ENCODE measurements at regions of chr6 and their contacts with region 1.

Region 1: DNA sequence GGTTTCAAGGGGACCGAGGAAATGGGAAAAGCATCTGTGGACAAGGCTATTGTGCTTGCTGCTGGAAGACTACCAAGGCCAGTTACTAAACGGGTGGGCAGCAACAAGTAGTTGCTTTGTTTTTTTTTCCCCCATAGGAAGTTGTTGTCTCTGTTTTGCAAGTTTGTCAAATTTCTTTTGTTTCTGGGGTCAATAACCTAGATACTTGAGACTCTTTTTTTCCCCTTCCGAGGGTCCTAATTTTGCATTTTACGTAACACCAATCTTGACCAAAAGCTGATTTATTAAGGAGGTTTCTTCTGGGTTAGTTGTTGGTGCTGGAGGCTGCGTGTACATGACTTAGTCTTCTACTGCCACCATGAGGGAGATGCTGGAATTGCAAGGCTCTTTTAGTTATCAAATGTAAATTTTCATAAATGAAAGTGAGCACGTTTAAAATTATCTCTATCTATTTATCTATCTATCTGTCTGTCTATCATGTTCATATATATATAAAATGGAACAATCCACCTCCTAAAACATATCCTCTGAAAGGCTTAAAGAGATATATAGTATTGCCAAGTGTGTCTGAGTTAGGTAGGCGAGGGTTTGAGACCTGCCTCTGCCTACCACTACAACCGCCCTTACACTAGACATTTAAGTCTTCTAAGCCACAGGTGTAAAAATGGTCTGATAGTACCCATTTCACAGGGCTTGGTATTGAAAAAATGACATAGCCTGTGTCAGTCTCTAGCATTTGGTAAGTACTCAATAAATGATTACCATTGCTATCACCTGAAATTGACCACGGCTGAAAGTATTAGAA is 60.2 kb downstream of the GCLC start:
- DNase-seq: peak; percentile 51 to 87
- ATAC-seq: peak; percentile 79 to 84 (median 81)
- H3K4me3 ChIP-seq: no peak overlapping the region
- H3K4me3 Mint-ChIP-seq: no peak overlapping the region
- H3K27ac ChIP-seq: no peak overlapping the region
- H3K27ac Mint-ChIP-seq: no peak overlapping the region
- H3K4me1 ChIP-seq: peaks cover 3% of the 10 kb centered on the region
- H3K4me1 Mint-ChIP-seq: peaks cover 0 to 6% of the 10 kb centered on the region in 2 donors
- H3K27me3 ChIP-seq: peaks cover 8% of the 10 kb centered on the region
- H3K27me3 Mint-ChIP-seq: peaks cover 16 to 26% of the 10 kb centered on the region in 2 donors
- CTCF ChIP-seq: peak; percentile 98

Region 2: GRCh38 chr6:52815167-52816092 is 669.2 kb before region 1 on chr6:
- intact Hi-C with region 1: loop called (anchors 10 kb)
- DNase-seq: peak; percentile 21 to 57
- ATAC-seq: peak; percentile 77 to 87 (median 85)
- H3K4me3 ChIP-seq: no peak overlapping the region
- H3K4me3 Mint-ChIP-seq: no peak overlapping the region
- H3K27ac ChIP-seq: no peak overlapping the region
- H3K27ac Mint-ChIP-seq: no peak overlapping the region
- H3K4me1 ChIP-seq: no peaks in the 10 kb centered on the region
- H3K4me1 Mint-ChIP-seq: no peaks in the 10 kb centered on the region
- H3K27me3 ChIP-seq: peaks cover 2% of the 10 kb centered on the region
- H3K27me3 Mint-ChIP-seq: peaks cover 0 to 19% of the 10 kb centered on the region in 2 donors
- CTCF ChIP-seq: peak; percentile 74

Region 3: GRCh38 chr6:53294095-53294494 is 190.6 kb before region 1 on chr6:
- intact Hi-C with region 1: loop called (anchors 5 kb)
- DNase-seq: peak in 1 of 2 donors; percentile 51
- ATAC-seq: peak in 1 of 3 donors; percentile 41
- H3K4me3 ChIP-seq: no peak overlapping the region
- H3K4me3 Mint-ChIP-seq: no peak overlapping the region
- H3K27ac ChIP-seq: no peak overlapping the region
- H3K27ac Mint-ChIP-seq: peak overlapping the region; percentile 24 to 88
- H3K4me1 ChIP-seq: peaks cover 27% of the 10 kb centered on the region
- H3K4me1 Mint-ChIP-seq: peaks cover 76 to 78% of the 10 kb centered on the region in 2 donors
- H3K27me3 ChIP-seq: no peaks in the 10 kb centered on the region
- H3K27me3 Mint-ChIP-seq: no peaks in the 10 kb centered on the region
- CTCF ChIP-seq: peak; percentile 44

Region 4: GRCh38 chr6:53410508-53411258 is 74.0 kb before region 1 on chr6:
- intact Hi-C with region 1: loop called (anchors 1 kb)
- DNase-seq: peak; percentile 36 to 81
- ATAC-seq: peak; percentile 88 to 100 (median 96)
- H3K4me3 ChIP-seq: no peak overlapping the region
- H3K4me3 Mint-ChIP-seq: no peak overlapping the region
- H3K27ac ChIP-seq: no peak overlapping the region
- H3K27ac Mint-ChIP-seq: no peak overlapping the region
- H3K4me1 ChIP-seq: no peaks in the 10 kb centered on the region
- H3K4me1 Mint-ChIP-seq: no peaks in the 10 kb centered on the region
- H3K27me3 ChIP-seq: no peaks in the 10 kb centered on the region
- H3K27me3 Mint-ChIP-seq: no peaks in the 10 kb centered on the region
- CTCF ChIP-seq: peak; percentile 70

Region 5: DNA sequence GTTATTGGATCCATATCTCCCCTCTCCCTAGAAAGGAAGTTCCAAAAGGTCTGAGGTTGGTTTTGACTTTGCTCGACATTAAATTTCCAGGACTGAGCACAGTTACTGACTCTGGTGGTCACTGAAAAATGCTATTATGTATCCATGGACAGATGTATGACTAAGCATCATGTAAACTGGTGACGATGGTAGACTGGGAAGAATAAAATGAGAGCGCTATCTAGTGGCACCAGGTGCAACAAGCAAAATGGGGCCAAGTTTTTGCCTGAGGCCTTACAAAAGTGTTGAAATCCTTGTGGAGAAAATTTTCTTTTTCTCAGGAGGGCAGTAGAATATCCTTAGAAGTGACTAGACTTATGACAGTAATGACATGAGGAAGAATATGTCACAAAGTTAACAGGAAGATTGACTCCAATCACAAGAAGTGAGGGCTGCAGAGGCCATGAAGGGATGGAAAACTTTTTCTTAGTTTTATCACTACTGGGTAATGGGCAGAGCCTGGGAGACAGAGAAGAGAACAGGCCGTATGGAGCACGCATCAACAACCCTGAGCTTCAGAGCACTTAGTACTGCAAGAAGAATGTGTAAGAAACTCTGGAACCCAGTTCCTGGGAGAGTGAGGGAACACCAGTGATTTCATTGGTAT is 47.0 kb before region 1 on chr6:
- intact Hi-C with region 1: no loop called
- DNase-seq: peak in 1 of 2 donors; percentile 58
- ATAC-seq: peak; percentile 49 to 78 (median 75)
- H3K4me3 ChIP-seq: no peak overlapping the region
- H3K4me3 Mint-ChIP-seq: no peak overlapping the region
- H3K27ac ChIP-seq: no peak overlapping the region
- H3K27ac Mint-ChIP-seq: peak overlapping the region in 1 of 2 donors; percentile 15
- H3K4me1 ChIP-seq: no peaks in the 10 kb centered on the region
- H3K4me1 Mint-ChIP-seq: peaks cover 5% of the 10 kb centered on the region in 2 donors
- H3K27me3 ChIP-seq: no peaks in the 10 kb centered on the region
- H3K27me3 Mint-ChIP-seq: peaks cover 2 to 15% of the 10 kb centered on the region in 2 donors
- CTCF ChIP-seq: peak; percentile 43

Region 6: DNA sequence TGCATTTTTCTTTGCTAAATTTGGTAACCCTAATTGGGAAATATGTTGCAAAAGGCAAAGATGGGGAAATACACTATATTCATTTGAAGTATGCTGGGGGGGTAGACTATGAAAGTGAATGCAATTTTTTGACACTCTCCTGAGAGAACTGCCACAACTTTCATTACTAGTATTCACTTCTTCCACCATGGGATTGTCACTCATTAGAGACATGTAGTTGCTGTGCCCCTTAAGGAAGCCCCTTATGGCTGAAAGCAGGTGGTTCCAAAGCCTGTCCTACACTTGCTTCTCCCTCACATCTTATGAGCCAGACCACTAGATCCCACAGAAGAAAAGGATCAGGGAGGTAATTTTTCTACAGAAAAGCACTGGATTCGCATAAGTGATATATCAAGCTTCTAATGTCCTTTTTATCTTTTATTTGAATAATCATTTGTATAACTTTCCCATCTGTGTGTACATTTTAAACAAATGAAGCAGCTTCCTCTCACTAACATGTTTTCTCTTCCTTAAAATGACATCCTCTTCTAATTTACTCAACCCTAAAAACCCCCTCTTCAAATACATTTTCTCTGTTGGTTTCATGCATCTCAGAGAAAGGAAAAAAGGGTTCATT is 23.5 kb before region 1 on chr6:
- intact Hi-C with region 1: no loop called
- DNase-seq: no peak
- ATAC-seq: no peak
- H3K4me3 ChIP-seq: no peak overlapping the region
- H3K4me3 Mint-ChIP-seq: no peak overlapping the region
- H3K27ac ChIP-seq: peak overlapping the region; percentile 61
- H3K27ac Mint-ChIP-seq: no peak overlapping the region
- H3K4me1 ChIP-seq: peaks cover 7% of the 10 kb centered on the region
- H3K4me1 Mint-ChIP-seq: no peaks in the 10 kb centered on the region
- H3K27me3 ChIP-seq: no peaks in the 10 kb centered on the region
- H3K27me3 Mint-ChIP-seq: peaks cover 3 to 11% of the 10 kb centered on the region in 2 donors
- CTCF ChIP-seq: no peak

Region 7: GRCh38 chr6:54135665-54136369 is 651.1 kb after region 1 on chr6:
- intact Hi-C with region 1: no loop called
- DNase-seq: no peak
- ATAC-seq: no peak
- H3K4me3 ChIP-seq: no peak overlapping the region
- H3K4me3 Mint-ChIP-seq: no peak overlapping the region
- H3K27ac ChIP-seq: no peak overlapping the region
- H3K27ac Mint-ChIP-seq: no peak overlapping the region
- H3K4me1 ChIP-seq: no peaks in the 10 kb centered on the region
- H3K4me1 Mint-ChIP-seq: no peaks in the 10 kb centered on the region
- H3K27me3 ChIP-seq: no peaks in the 10 kb centered on the region
- H3K27me3 Mint-ChIP-seq: no peaks in the 10 kb centered on the region
- CTCF ChIP-seq: no peak